Activated CD4-positive, alpha-beta T cell treated with anti-CD3 and anti-CD28 coated beads for 36 hours (primary cell): ENCODE measurements at regions of chr3 and their contacts with region 1.

Region 1: GRCh38 chr3:192899540-192899982 is 18.1 kb downstream of the MB21D2 start:
- DNase-seq: peak; percentile 13
- ATAC-seq: peak; percentile 12
- H3K4me3 Mint-ChIP-seq: no peak overlapping the region
- H3K27ac Mint-ChIP-seq: peak overlapping the region; percentile 77
- H3K4me1 Mint-ChIP-seq: peaks cover 23% of the 10 kb centered on the region
- H3K27me3 Mint-ChIP-seq: peaks cover 23% of the 10 kb centered on the region

Region 2: DNA sequence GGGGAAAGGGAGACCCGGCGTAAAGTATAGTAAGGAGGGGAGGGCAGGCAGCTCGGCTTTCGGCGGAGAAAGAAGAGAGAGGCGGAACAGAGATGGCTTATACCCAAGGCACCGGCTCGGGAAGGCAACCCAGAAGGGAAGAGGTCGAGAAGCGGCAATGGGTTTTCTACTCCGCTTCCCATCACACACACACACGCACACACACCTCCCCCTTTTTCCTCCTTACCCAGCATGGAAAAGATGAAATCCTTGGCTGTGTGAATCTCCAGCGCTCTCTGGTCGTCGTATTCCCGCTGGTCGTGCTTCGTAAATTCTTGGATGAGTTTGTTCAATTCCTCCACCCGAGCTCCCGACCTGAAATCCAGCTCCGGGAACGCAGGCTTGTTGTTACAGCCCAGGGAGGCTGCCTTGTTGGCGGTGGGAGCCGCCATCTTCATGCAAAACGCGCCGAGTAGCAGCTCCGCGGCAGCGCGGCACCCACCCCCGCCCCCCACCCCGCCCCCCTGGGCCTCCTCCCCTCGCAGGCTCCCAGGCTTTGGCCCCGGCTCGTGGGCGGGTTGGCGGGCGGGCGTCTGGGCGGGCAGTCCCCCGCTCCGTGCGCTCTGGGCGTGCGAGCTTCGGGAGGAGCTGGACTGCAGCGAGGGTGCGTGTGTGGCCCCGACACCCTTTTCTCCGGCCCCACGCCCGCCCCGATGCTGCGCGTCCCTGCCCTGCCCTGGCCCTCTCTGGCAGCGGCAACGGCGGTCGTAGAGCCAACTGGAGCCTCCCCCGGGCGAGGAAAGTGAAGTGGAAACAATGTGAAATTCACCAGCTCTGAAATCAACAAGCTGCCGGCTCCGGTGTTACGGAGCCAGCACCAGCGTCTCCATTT is 18.1 kb after region 1 on chr3 and contains the start of gene MB21D2:
- CTCF ChIA-PET with region 1: no interaction called
- POLR2A ChIA-PET with region 1: interaction called, 7 read pairs
- intact Hi-C with region 1: loop called in 1 of 2 experiments (anchors 2 kb)
- DNase-seq: peak; percentile 67
- ATAC-seq: peak; percentile 63
- H3K4me3 Mint-ChIP-seq: peak within 1 kb of the TSS; percentile 82
- H3K27ac Mint-ChIP-seq: peak within 1 kb of the TSS; percentile 71
- H3K4me1 Mint-ChIP-seq: peaks cover 20% of the 10 kb centered on the region
- H3K27me3 Mint-ChIP-seq: peaks cover 65% of the 10 kb centered on the region
- total RNA-seq, gene MB21D2: 2.2 to 2.5 TPM